Sciatic nerve (tissue), 2 donors: ENCODE measurements at regions of chr1 and their contacts with region 1.

Region 1: DNA sequence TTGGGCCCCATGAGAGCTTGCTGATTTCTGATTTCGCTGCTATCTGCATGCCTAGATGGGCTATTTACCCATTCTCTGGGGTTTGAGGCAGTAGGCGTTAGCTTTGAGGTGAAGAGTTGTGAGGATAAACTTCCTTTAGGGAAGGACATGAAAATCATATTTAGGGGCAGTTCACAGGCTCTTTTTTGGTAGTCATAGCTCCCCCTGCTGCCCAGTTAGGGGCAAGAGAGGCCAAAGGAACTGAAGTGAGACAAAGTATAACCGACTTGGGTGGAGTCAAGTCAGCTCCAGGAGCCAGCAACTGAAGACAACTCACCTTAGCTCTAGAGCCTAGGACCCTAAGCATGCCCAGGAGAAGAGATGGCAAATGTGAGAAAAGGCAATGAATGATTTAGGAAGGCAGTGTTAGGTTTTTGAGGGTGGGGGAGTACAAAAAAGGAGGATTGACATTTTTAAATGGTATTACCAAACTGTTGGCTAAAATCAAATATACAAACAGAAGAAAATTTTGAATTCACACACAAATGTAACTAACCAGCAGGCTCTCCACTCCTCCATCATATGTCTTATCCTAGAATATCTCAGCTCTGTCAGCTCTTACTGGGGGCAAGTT is 625.2 kb downstream of the LMO4 start:
- DNase-seq: peak; percentile 73
- ATAC-seq: peak; percentile 85

Region 2: DNA sequence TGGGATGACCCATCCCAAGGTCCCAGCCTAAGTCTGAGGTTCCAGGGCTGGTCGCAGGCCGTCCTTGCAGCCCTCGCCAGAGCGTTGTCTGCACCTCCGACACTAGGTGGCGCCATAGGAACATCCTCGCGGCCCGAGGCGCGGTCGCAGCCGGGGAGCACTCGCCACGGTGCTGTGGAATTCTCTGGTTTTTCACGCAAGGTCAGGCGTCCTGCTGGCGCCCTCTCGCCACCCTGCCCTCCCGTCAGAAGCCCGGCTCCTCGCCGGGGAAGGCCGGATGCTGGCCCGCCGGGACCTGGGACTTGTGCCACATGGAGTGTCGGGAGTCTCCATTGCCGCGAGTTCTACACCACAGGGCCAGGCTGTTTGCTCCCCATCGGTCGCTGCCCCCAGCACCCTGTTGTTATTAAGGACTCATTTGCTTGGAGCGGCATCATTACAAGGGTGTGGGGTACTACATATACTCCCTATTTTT is 822.0 kb before region 1 on chr1:
- intact Hi-C with region 1: loop called (anchors 10 kb)
- DNase-seq: peak; percentile 93
- ATAC-seq: peak; percentile 91

Region 3: GRCh38 chr1:87328272-87329050 is 625.4 kb before region 1 on chr1 and contains the start of gene LMO4:
- intact Hi-C with region 1: loop called (anchors 10 kb)
- DNase-seq: peak; percentile 97
- ATAC-seq: peak; percentile 93
- total RNA-seq, gene LMO4: 55.0 TPM